Naive thymus-derived CD4-positive, alpha-beta T cell (primary cell): ENCODE measurements at regions of chr21 and their contacts with region 1.

Region 1: GRCh38 chr21:46144464-46145070 is 10.8 kb downstream of the FTCD start:
- DNase-seq: no peak
- ATAC-seq: no peak
- H3K4me3 ChIP-seq: no peak overlapping the region
- H3K4me3 Mint-ChIP-seq: peak overlapping the region in 5 of 10 donors; percentile 29 to 89 (median 80)
- H3K27ac ChIP-seq: no peak overlapping the region
- H3K27ac Mint-ChIP-seq: peak overlapping the region in 6 of 9 donors; percentile 33 to 92 (median 59)
- H3K4me1 ChIP-seq: no peaks in the 10 kb centered on the region
- H3K4me1 Mint-ChIP-seq: peaks cover 6 to 13% (median 8%) of the 10 kb centered on the region in 7 donors
- H3K27me3 ChIP-seq: no peaks in the 10 kb centered on the region
- H3K27me3 Mint-ChIP-seq: no peaks in the 10 kb centered on the region

Region 2: GRCh38 chr21:45973659-45974072 is 170.9 kb before region 1 on chr21:
- CTCF ChIA-PET with region 1: interaction called, 9 read pairs
- POLR2A ChIA-PET with region 1: no interaction called
- intact Hi-C with region 1: loop called in 1 of 2 experiments (anchors 1 kb)
- DNase-seq: peak; percentile 59 to 84 (median 77)
- ATAC-seq: peak; percentile 94
- H3K4me3 ChIP-seq: peak overlapping the region; percentile 78
- H3K4me3 Mint-ChIP-seq: peak overlapping the region; percentile 75 to 94 (median 92)
- H3K27ac ChIP-seq: peak overlapping the region; percentile 50
- H3K27ac Mint-ChIP-seq: peak overlapping the region in 8 of 9 donors; percentile 41 to 91 (median 80)
- H3K4me1 ChIP-seq: peaks cover 20 to 22% of the 10 kb centered on the region in 2 donors
- H3K4me1 Mint-ChIP-seq: peaks cover 5 to 28% (median 18%) of the 10 kb centered on the region in 7 donors
- H3K27me3 ChIP-seq: peaks cover 0 to 13% of the 10 kb centered on the region in 2 donors
- H3K27me3 Mint-ChIP-seq: peaks cover 0 to 44% (median 10%) of the 10 kb centered on the region in 5 donors

Region 3: GRCh38 chr21:46184625-46185555 is 40.3 kb after region 1 on chr21:
- CTCF ChIA-PET with region 1: no interaction called
- POLR2A ChIA-PET with region 1: no interaction called
- intact Hi-C with region 1: loop called (anchors 1 kb)
- DNase-seq: peak; percentile 48 to 79 (median 74)
- ATAC-seq: peak; percentile 79
- H3K4me3 ChIP-seq: peak overlapping the region; percentile 67
- H3K4me3 Mint-ChIP-seq: peak overlapping the region; percentile 80 to 92 (median 86)
- H3K27ac ChIP-seq: peak overlapping the region; percentile 68
- H3K27ac Mint-ChIP-seq: peak overlapping the region; percentile 75 to 91 (median 86)
- H3K4me1 ChIP-seq: peaks cover 0 to 5% of the 10 kb centered on the region in 2 donors
- H3K4me1 Mint-ChIP-seq: peaks cover 0 to 16% (median 10%) of the 10 kb centered on the region in 7 donors
- H3K27me3 ChIP-seq: no peaks in the 10 kb centered on the region
- H3K27me3 Mint-ChIP-seq: no peaks in the 10 kb centered on the region

Region 4: DNA sequence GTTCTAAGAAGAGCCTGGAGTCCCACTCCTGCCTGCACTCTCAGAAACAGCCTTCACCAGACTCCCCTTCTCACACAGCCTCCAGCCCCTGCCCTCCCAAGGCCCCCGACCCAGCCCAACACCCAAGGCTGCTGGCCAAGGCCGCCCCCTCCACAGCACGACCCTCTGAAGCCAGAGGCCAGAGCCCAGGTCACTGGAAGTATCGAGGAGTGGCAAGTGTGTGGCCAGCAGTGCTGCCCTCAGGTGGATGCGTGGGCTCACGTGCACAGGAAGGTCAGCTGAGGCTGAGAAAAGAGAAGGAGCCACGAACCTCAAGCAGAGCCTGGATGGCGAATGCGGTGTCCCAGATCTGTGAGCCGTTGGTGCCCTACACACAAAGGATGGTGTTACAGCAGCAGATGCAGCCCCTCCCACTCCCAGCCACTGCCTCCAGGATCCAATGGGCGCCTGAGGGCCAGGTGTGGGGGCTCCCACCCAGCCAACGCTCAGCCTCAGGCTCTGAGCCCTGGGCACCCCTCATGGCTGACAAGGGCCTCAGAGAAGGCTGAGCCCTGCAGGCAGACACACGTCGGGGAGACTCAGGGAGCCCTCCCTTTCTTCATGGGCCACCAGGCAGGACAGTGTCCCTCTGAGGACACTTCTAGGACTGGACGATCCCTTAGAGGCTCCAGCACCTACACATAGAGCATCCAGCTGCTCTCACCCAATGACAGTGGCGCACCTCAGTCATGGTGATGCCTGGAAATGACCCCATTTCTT is 66.0 kb after region 1 on chr21:
- CTCF ChIA-PET with region 1: no interaction called
- POLR2A ChIA-PET with region 1: no interaction called
- intact Hi-C with region 1: no loop called
- DNase-seq: no peak
- ATAC-seq: no peak
- H3K4me3 ChIP-seq: no peak overlapping the region
- H3K4me3 Mint-ChIP-seq: no peak overlapping the region
- H3K27ac ChIP-seq: no peak overlapping the region
- H3K27ac Mint-ChIP-seq: no peak overlapping the region
- H3K4me1 ChIP-seq: no peaks in the 10 kb centered on the region
- H3K4me1 Mint-ChIP-seq: no peaks in the 10 kb centered on the region
- H3K27me3 ChIP-seq: no peaks in the 10 kb centered on the region
- H3K27me3 Mint-ChIP-seq: no peaks in the 10 kb centered on the region